Activated CD4-positive, alpha-beta T cell treated with anti-CD3 and anti-CD28 coated beads, Interleukin-2, amount 10 ng/mL, durations not matched to agents 7 days and 5 days (primary cell): ENCODE measurements at regions of chr17 and their contacts with region 1.

Region 1: DNA sequence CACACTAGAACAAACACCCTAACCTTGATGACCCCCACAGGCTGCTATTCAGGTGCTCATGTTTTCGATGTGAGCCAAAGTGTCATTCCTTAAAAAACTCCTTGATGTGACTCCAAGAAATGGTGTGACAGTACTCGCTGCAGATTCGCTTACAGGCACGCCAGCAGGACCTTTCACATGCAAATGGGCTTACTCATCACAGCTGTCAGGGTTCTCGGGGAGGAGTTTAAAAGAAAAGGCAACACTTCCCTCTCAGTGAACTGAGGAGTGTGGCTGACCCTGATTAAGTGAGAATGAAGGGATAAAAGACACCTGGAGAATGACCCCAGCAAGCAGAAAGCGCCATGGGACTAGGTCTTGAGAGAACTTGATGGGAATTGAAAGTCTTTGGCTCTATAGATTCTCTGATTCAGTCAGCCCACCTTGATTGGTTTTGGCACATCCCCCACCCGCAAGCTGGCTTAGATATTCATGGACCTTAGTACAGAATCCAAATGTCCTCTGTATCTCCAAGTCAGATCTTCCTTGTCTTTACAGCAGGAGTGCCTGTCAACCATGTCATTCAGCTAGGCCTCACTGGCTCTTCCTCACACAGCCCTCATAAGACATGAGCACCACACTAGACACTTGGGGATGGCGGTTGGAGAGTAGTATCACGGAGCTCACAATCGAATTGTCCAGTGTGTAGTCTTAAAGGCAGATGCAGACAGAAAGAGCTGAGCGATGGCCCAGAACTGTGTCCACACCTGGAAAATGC is 82.6 kb downstream of the HIC1 start:
- DNase-seq: no peak
- H3K4me3 Mint-ChIP-seq: no peak overlapping the region
- H3K27ac Mint-ChIP-seq: no peak overlapping the region
- H3K4me1 Mint-ChIP-seq: peaks cover 18% of the 10 kb centered on the region
- H3K27me3 Mint-ChIP-seq: no peaks in the 10 kb centered on the region

Region 2: DNA sequence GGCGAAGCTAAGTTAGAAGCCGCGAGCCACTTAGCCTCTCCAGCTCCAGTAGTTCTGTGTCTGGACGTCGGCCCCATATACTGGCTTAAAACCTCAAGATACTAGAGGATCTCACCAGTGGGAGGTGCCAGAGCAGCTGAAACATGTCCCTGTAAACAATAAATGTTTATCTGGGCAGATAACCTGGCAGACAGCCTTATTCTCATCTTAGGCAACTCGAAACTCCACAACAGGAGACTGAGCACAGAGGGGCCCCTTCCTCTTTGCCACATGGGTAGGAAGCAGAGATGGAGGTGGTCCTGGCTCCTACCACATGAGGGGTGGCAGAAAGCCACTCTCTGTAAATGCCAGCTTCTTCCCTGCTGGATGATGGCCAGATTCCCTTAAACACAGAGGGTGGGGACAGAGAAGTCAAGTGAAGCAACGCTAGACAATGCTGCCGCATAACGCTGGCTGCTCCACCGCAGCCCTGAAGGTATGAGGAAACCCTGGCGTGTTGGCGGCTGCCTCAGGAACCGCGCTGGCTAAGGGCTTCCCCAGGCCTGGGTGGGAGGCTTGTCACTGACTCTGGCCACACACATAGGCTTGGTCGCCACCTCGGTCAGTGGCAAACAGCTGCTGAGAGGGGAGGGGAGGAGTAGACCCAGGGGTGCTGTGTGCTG is 14.7 kb before region 1 on chr17:
- CTCF ChIA-PET with region 1: interaction called, 10 read pairs
- POLR2A ChIA-PET with region 1: no interaction called
- DNase-seq: no peak
- H3K4me3 Mint-ChIP-seq: no peak overlapping the region
- H3K27ac Mint-ChIP-seq: peak overlapping the region; percentile 50
- H3K4me1 Mint-ChIP-seq: peaks cover 26% of the 10 kb centered on the region
- H3K27me3 Mint-ChIP-seq: no peaks in the 10 kb centered on the region